WTC11 (cell line): ENCODE measurements at regions of chr7 and their contacts with region 1.

Region 1: GRCh38 chr7:82234457-82235049 is 209.0 kb downstream of the CACNA2D1 start:
- DNase-seq: no peak
- ATAC-seq: no peak
- H3K4me3 Mint-ChIP-seq: no peak overlapping the region
- H3K27ac Mint-ChIP-seq: no peak overlapping the region
- H3K4me1 Mint-ChIP-seq: peaks cover 28% of the 10 kb centered on the region
- H3K27me3 Mint-ChIP-seq: no peaks in the 10 kb centered on the region
- CTCF ChIP-seq: peak; percentile 48

Region 2: DNA sequence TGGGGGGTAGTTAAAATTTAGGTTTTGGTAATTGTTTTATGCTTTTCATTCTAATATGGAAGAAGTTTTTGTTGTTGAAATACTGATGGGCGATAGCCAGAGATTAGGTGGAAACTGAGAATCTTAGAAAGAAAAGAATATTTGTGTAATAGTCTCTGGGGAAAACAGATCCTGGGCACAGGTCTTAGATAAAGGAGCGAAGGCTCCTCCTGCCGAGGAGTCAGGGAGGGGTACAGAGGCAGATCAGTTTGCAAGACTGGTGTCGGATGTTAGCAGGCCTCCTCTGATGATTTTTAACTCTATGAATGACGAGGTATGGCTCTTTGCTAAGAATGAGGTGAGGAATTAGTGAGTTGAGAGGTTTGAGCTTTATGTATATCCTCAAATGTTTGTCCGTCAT is 804.4 kb before region 1 on chr7:
- CTCF ChIA-PET with region 1: no interaction called
- POLR2A ChIA-PET with region 1: interaction called, 16 read pairs
- DNase-seq: no peak
- ATAC-seq: peak; percentile 74
- H3K4me3 Mint-ChIP-seq: no peak overlapping the region
- H3K27ac Mint-ChIP-seq: no peak overlapping the region
- H3K4me1 Mint-ChIP-seq: peaks cover 17% of the 10 kb centered on the region
- H3K27me3 Mint-ChIP-seq: no peaks in the 10 kb centered on the region; the same call in 1 of the 2 replicates
- CTCF ChIP-seq: no peak

Region 3: DNA sequence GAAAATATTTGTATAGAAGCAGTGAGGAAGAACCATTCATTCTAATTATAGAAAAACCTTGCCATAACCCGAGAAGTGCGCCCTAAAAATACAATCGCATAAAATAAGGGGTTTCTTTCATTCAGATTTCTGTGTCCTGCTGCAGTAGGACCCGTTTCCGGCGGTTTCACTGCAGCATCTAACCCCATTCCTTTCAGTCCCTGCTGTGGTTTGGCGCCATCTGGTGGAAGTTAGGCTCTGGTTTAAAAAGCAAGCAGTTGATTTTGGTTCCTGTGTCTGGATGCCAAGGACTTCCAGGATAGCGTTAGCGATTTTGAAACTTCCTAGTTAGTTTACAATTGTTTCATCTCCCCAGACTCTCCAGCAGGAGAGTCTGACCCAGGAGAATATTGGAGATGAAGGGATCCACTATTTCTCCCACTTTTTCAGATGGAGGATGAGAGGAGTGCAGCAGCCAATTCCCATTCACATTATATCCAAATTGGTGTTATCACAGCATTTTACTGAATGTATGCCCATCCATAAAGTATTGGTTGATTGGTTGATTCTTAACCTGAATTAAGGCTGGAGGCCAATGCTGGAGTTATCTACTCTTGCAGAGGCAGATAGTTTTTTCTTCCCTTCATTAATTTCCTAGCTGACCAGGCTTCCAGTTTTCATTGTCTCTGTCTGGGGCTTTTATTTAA is 337.8 kb after region 1 on chr7:
- CTCF ChIA-PET with region 1: interaction called, 10 read pairs
- POLR2A ChIA-PET with region 1: no interaction called
- DNase-seq: peak; percentile 93
- ATAC-seq: peak; percentile 96
- H3K4me3 Mint-ChIP-seq: 0 out of 2 replicates have a peak overlapping the region, but pooled peaks have one; percentile 11
- H3K27ac Mint-ChIP-seq: no peak overlapping the region; the same call in 1 of the 2 replicates
- H3K4me1 Mint-ChIP-seq: peaks cover 14% of the 10 kb centered on the region
- H3K27me3 Mint-ChIP-seq: no peaks in the 10 kb centered on the region
- CTCF ChIP-seq: peak; percentile 69